ENCODE measurements at regions of chr3 and their contacts with region 1.

Region 1: GRCh38 chr3:146189519-146190173 is 28.7 kb upstream of the PLOD2 start:
- DNase-seq: peak; percentile 75
- H3K4me3 Mint-ChIP-seq: peak overlapping the region; percentile 22
- H3K27ac Mint-ChIP-seq: no peak overlapping the region
- H3K4me1 Mint-ChIP-seq: peaks cover 21% of the 10 kb centered on the region
- H3K27me3 Mint-ChIP-seq: no peaks in the 10 kb centered on the region
- CTCF ChIP-seq: peak; percentile 48

Region 2: GRCh38 chr3:146052791-146053310 is 136.8 kb before region 1 on chr3:
- CTCF ChIA-PET with region 1: interaction called, 13 read pairs
- POLR2A ChIA-PET with region 1: interaction called, 3 read pairs
- intact Hi-C with region 1: no loop called
- DNase-seq: no peak
- H3K4me3 Mint-ChIP-seq: no peak overlapping the region
- H3K27ac Mint-ChIP-seq: no peak overlapping the region
- H3K4me1 Mint-ChIP-seq: no peaks in the 10 kb centered on the region
- H3K27me3 Mint-ChIP-seq: no peaks in the 10 kb centered on the region
- CTCF ChIP-seq: no peak

Region 3: GRCh38 chr3:146072061-146072460 is 117.6 kb before region 1 on chr3:
- CTCF ChIA-PET with region 1: interaction called, 33 read pairs
- POLR2A ChIA-PET with region 1: interaction called, 4 read pairs
- intact Hi-C with region 1: no loop called
- DNase-seq: no peak
- H3K4me3 Mint-ChIP-seq: no peak overlapping the region
- H3K27ac Mint-ChIP-seq: peak overlapping the region; percentile 3
- H3K4me1 Mint-ChIP-seq: peaks cover 16% of the 10 kb centered on the region
- H3K27me3 Mint-ChIP-seq: no peaks in the 10 kb centered on the region
- CTCF ChIP-seq: no peak

Region 4: DNA sequence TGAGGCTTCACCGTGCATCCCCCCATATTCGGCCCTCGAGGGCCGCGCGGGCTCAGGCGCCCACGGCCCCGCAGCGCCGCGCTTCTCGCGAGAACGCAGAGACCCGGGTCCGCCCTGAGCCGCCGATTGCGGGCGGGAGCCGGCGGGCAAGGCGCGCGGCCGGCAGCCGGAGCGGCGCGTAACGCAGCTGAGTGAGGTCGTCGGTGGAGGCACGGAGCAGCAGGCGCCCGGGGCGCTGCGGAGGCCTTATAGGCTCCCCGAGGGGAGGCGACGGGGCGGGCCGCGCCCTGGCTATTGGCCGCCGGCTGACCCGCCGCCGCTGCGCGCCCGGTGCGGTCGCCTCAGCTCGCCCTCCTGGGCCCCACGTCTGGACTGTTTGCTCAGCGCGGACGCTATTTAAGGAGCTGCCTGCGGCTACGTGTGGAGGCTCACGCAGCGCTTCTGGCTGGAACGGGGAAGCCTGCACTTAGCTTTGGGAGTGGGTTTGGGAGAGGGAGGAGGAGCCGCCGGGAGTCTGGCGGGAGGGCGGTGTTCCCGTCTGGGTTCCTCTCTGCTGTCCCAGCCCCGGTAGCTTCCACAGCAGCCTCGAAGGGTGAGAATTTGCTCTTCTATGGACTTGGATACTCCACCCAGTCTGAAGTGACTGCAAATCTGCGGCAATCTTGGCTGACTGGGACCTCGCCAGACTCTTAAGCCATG is 28.5 kb before region 1 on chr3 and contains the start of gene PLOD2:
- CTCF ChIA-PET with region 1: interaction called, 45 read pairs
- POLR2A ChIA-PET with region 1: interaction called, 26 read pairs
- intact Hi-C with region 1: loop called (anchors 1 kb)
- DNase-seq: peak; percentile 75
- H3K4me3 Mint-ChIP-seq: peak within 1 kb of the TSS; percentile 86
- H3K27ac Mint-ChIP-seq: peak within 1 kb of the TSS; percentile 86
- H3K4me1 Mint-ChIP-seq: peaks cover 44% of the 10 kb centered on the region
- H3K27me3 Mint-ChIP-seq: no peaks in the 10 kb centered on the region
- CTCF ChIP-seq: no peak
- total RNA-seq, gene PLOD2: 109 and 149 TPM in 2 replicates

Region 5: DNA sequence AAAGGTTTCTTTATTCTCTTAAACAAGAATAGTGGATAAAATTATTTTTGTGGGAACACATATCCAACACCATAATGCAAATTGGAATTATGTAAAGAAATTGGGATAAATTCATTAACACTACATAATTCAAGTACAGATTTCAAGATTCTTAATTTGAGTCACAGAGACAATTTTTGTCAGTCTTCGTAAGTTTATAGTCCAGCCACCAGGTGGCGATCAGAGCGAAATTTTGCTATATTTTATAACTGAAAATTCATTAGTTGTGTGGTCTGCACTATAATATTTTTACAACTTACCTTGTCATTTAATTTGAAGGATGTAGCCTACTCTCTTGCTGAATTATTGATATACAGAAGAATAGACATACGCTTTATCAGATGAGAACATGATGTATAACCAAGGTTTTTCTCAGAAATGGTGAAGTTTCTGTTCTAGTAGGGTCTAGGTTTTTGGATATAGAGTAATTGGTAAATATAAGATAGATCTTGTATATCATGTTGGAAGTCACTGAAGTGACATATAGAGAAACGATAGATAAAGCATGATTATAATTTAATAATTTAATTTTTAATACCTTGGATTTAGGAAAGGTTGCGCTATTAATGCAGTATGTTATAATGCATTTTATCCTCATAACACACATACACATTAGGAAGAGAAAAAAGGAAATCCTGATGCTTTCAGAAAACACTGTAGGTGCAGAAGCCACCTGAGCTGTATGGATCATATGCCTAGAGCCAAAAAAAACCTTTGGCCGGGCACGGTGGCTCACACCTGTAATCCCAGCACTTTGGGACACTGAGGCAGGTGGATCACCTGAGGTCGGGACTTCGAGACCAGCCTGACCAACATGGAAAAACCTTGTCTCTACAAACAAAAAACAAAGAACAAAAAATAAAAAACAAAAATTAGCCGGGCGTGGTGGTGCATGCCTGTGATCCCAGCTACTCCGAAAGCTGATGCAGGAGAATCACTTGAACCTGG is 29.5 kb after region 1 on chr3:
- CTCF ChIA-PET with region 1: interaction called, 25 read pairs
- POLR2A ChIA-PET with region 1: no interaction called
- intact Hi-C with region 1: no loop called
- DNase-seq: peak; percentile 49
- H3K4me3 Mint-ChIP-seq: no peak overlapping the region
- H3K27ac Mint-ChIP-seq: no peak overlapping the region
- H3K4me1 Mint-ChIP-seq: peaks cover 22% of the 10 kb centered on the region
- H3K27me3 Mint-ChIP-seq: no peaks in the 10 kb centered on the region
- CTCF ChIP-seq: peak; percentile 66

Region 6: GRCh38 chr3:146241523-146242240 is 52.0 kb after region 1 on chr3:
- CTCF ChIA-PET with region 1: no interaction called
- POLR2A ChIA-PET with region 1: no interaction called
- intact Hi-C with region 1: no loop called
- DNase-seq: no peak
- H3K4me3 Mint-ChIP-seq: no peak overlapping the region
- H3K27ac Mint-ChIP-seq: no peak overlapping the region
- H3K4me1 Mint-ChIP-seq: no peaks in the 10 kb centered on the region
- H3K27me3 Mint-ChIP-seq: no peaks in the 10 kb centered on the region
- CTCF ChIP-seq: no peak

Region 7: DNA sequence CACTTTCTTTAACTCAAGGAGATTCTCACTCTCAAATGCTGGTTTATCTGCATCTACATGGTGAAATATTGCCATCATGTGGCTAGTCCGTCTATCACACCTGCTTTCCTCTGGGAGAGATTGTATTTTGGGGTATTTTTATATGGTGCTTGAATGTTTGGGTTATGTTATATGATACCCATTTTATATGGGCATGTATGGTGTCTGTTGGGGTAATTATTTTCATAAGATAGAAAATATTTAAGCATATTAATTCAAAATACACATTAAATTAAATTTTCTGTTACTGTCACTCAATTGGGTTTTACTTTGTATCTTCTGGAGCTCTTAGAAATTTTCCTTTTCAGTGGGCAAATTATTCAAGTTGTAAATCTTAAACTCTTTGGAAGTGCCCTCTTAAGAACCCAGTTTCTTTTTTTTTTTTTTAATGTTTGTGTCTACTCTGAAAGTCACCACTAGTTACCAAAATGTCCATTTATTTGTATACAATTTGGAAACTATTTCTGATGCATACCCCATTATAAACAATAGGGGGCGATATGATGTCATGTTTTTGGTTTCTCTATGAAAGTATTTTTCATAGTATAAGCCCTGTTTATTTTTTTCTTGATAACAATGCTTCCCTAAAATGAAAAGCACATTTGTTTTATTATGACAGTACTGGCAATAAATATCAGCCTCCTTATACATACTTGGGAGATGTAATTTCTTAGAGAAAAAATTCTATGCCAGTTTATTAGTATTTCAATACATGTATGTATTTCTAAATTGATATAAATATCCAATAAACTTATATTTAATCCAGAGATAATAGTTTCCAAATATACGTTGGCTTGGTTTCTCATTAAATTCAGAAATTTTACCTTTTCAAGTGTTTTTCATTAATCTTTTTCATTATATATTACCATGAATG is 451.6 kb after region 1 on chr3:
- CTCF ChIA-PET with region 1: interaction called, 6 read pairs
- POLR2A ChIA-PET with region 1: no interaction called
- intact Hi-C with region 1: loop called (anchors 2 kb)
- DNase-seq: peak; percentile 51
- H3K4me3 Mint-ChIP-seq: no peak overlapping the region
- H3K27ac Mint-ChIP-seq: no peak overlapping the region
- H3K4me1 Mint-ChIP-seq: no peaks in the 10 kb centered on the region
- H3K27me3 Mint-ChIP-seq: peaks cover 24% of the 10 kb centered on the region
- CTCF ChIP-seq: peak; percentile 57

Measured in MCF 10A (cell line).